ENCODE measurements at regions of chr1 and their contacts with region 1.

Region 1: DNA sequence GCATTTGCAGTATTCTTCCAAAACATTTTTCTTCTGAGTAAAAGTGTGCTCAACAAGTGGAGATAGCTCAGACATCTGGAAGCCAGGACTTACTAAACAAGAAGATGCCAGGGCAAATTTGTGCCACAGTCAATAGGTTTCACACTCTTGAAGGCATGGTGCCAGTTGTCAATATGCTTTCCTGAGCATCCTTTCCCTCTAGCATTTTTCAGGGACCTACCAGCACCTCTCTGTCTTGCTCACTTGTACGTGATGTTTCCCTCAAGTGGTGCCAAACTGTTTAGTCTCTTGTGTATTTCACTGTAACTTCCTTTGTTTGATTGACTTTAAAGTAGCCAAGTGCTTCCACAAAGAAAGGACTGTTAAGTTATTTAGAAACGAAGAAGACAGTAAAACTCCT is 194.0 kb upstream of the SGIP1 start:
- DNase-seq: no peak
- CTCF ChIP-seq: no peak

Region 2: DNA sequence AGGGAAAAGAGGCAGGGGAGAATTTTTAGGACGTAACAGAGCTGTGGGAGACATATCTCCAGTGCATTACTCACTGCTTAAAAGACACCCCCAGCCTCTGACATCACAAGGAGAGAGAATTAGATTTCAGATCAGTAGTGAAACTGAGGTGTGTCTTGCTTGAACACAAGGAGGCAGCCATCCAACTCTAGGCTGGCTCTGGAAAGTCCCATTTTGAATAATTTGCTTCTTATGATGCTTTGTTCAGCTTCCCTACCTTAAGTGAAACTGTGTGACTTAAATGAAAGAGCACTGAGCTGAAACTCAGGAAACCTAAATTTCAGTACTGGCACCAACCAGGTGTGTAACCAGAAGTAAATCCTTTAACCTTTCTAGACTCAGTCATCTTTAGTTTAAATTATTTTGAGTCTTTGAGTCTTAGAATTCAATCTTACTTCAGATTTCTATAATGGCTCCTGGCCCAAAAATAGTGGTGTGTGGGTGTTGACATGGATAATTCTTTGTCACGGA is 57.5 kb before region 1 on chr1:
- CTCF ChIA-PET with region 1: interaction called, 10 read pairs
- POLR2A ChIA-PET with region 1: interaction called, 4 read pairs
- DNase-seq: peak; percentile 65
- CTCF ChIP-seq: peak; percentile 26

Region 3: DNA sequence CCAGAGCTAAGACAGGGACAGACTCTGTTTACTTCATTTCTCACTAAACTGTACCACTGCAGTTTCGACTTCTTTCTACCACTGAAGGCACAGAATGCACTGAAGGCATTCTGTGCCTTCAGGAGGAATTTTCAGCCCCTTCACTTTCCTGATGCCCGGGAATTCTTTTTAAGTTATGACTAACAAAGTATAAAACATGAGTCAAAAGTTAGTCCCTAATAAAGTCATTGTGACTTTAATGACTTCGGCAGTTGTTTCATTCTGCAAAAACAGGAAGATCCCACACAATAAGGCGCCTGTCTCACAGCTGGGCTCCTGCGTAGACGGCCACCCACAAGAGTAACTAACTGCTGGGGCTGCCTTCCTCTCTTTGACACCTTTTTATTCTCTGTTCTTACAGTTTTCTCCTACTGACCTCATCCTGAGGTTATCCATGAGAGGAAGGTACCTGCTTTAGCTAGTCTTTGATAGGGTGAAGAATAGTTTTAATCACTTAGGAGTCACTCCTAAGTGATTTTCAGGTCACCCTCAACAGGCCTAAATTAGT is 10.1 kb after region 1 on chr1:
- CTCF ChIA-PET with region 1: interaction called, 62 read pairs
- POLR2A ChIA-PET with region 1: interaction called, 4 read pairs
- DNase-seq: no peak
- CTCF ChIP-seq: no peak

Region 4: DNA sequence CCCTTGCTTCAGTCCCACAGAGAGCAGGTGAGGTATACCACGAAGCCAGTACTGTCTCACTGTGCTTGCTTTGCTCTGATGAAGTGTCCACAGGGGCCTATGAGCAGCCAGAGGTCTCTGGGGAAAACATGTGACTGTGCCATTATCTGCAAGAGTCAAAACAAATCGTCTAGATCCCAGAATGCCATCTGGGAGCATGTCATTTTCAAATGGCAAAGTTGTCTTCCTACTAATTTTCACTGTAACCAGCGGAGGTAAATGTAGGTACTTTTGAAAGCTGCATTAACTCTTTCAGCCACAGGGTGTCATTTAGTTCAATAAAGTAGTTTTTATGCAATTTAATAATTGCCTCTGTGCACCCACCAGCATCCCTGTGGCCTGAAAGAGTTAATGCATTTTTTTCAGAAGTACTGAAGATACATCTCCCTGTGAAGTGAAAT is 20.4 kb after region 1 on chr1:
- CTCF ChIA-PET with region 1: interaction called, 17 read pairs
- POLR2A ChIA-PET with region 1: no interaction called
- DNase-seq: no peak
- CTCF ChIP-seq: peak; percentile 36